Naive thymus-derived CD4-positive, alpha-beta T cell (primary cell): ENCODE measurements at regions of chr2 and their contacts with region 1.

Region 1: GRCh38 chr2:10832203-10832936 is 19.8 kb upstream of the PDIA6 start:
- DNase-seq: peak; percentile 66 to 85 (median 75)
- ATAC-seq: peak; percentile 94
- H3K4me3 ChIP-seq: no peak overlapping the region
- H3K4me3 Mint-ChIP-seq: peak overlapping the region in 8 of 10 donors; percentile 33 to 76 (median 48)
- H3K27ac ChIP-seq: no peak overlapping the region
- H3K27ac Mint-ChIP-seq: peak overlapping the region in 1 of 9 donors; percentile 56
- H3K4me1 ChIP-seq: peaks cover 0 to 2% of the 10 kb centered on the region in 2 donors
- H3K4me1 Mint-ChIP-seq: peaks cover 0 to 16% (median 5%) of the 10 kb centered on the region in 7 donors
- H3K27me3 ChIP-seq: no peaks in the 10 kb centered on the region
- H3K27me3 Mint-ChIP-seq: peaks cover 0 to 29% (median 13%) of the 10 kb centered on the region in 5 donors

Region 2: DNA sequence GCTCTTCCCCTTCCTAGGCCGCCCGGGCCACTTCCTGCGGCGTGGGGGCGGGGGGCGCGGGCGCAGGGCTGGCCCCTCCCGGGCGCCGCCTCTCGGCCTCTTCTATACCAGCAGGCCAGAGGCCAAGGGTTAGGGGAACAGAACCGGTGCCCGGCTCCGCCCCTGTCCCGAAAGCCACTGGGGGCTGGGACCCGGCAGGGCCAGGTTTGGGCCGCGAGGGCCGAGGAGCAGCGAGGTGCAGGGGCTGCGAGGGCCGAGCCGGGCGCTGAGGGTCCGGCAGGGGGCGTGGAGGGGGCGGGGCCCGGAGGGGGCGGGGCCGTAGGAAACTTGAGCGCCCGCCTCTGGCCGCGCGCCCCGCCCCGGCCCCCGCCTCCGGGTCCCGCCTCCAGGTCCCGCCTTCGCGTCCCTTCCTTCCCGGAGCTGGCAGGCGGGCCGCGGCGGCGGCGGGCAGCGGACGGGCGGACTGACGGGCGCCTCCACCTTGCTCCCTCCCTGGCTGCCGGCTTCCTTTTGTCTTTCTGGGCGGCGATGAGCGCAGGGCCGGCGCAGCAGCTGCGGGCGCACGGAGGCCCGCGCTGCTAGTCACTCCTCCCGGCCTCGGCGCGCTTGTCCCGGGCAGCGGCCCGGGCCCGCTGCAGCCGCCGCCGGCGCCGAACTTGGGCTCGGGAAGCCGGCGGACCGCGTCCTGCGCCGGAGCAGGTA is 529.7 kb before region 1 on chr2 and contains the start of gene HPCAL1:
- CTCF ChIA-PET with region 1: no interaction called
- POLR2A ChIA-PET with region 1: no interaction called
- intact Hi-C with region 1: no loop called
- DNase-seq: peak; percentile 69 to 90 (median 84)
- ATAC-seq: peak; percentile 85
- H3K4me3 ChIP-seq: peak within 1 kb of the TSS; percentile 72
- H3K4me3 Mint-ChIP-seq: peak within 1 kb of the TSS; percentile 89 to 100 (median 99)
- H3K27ac ChIP-seq: peak within 1 kb of the TSS; percentile 78
- H3K27ac Mint-ChIP-seq: peak within 1 kb of the TSS; percentile 85 to 97 (median 94)
- H3K4me1 ChIP-seq: peaks cover 42 to 62% of the 10 kb centered on the region in 2 donors
- H3K4me1 Mint-ChIP-seq: peaks cover 46 to 77% (median 66%) of the 10 kb centered on the region in 7 donors
- H3K27me3 ChIP-seq: no peaks in the 10 kb centered on the region
- H3K27me3 Mint-ChIP-seq: no peaks in the 10 kb centered on the region
- total RNA-seq, gene HPCAL1: 44.9 to 90.5 (median 65.8) TPM

Region 3: GRCh38 chr2:10654069-10654468 is 178.3 kb before region 1 on chr2:
- CTCF ChIA-PET with region 1: no interaction called
- POLR2A ChIA-PET with region 1: no interaction called
- intact Hi-C with region 1: no loop called
- DNase-seq: peak in 1 of 9 donors; percentile 39
- ATAC-seq: peak; percentile 54
- H3K4me3 ChIP-seq: no peak overlapping the region
- H3K4me3 Mint-ChIP-seq: peak overlapping the region in 1 of 10 donors; percentile 3
- H3K27ac ChIP-seq: no peak overlapping the region
- H3K27ac Mint-ChIP-seq: peak overlapping the region in 4 of 9 donors; percentile 19 to 67 (median 33)
- H3K4me1 ChIP-seq: peaks cover 0 to 5% of the 10 kb centered on the region in 2 donors
- H3K4me1 Mint-ChIP-seq: peaks cover 5 to 47% (median 13%) of the 10 kb centered on the region in 7 donors
- H3K27me3 ChIP-seq: no peaks in the 10 kb centered on the region
- H3K27me3 Mint-ChIP-seq: no peaks in the 10 kb centered on the region

Region 4: GRCh38 chr2:10864861-10865636 is 32.7 kb after region 1 on chr2:
- CTCF ChIA-PET with region 1: no interaction called
- POLR2A ChIA-PET with region 1: no interaction called
- intact Hi-C with region 1: loop called in 1 of 2 experiments (anchors 1 kb)
- DNase-seq: peak in 6 of 9 donors; percentile 1 to 37 (median 22)
- ATAC-seq: peak; percentile 53
- H3K4me3 ChIP-seq: no peak overlapping the region
- H3K4me3 Mint-ChIP-seq: peak overlapping the region in 9 of 10 donors; percentile 46 to 78 (median 61)
- H3K27ac ChIP-seq: no peak overlapping the region
- H3K27ac Mint-ChIP-seq: peak overlapping the region in 2 of 9 donors; percentile 18 to 36
- H3K4me1 ChIP-seq: peaks cover 13 to 15% of the 10 kb centered on the region in 2 donors
- H3K4me1 Mint-ChIP-seq: peaks cover 13 to 59% (median 35%) of the 10 kb centered on the region in 7 donors
- H3K27me3 ChIP-seq: peaks cover 0 to 3% of the 10 kb centered on the region in 2 donors
- H3K27me3 Mint-ChIP-seq: peaks cover 0 to 46% (median 11%) of the 10 kb centered on the region in 5 donors

Region 5: DNA sequence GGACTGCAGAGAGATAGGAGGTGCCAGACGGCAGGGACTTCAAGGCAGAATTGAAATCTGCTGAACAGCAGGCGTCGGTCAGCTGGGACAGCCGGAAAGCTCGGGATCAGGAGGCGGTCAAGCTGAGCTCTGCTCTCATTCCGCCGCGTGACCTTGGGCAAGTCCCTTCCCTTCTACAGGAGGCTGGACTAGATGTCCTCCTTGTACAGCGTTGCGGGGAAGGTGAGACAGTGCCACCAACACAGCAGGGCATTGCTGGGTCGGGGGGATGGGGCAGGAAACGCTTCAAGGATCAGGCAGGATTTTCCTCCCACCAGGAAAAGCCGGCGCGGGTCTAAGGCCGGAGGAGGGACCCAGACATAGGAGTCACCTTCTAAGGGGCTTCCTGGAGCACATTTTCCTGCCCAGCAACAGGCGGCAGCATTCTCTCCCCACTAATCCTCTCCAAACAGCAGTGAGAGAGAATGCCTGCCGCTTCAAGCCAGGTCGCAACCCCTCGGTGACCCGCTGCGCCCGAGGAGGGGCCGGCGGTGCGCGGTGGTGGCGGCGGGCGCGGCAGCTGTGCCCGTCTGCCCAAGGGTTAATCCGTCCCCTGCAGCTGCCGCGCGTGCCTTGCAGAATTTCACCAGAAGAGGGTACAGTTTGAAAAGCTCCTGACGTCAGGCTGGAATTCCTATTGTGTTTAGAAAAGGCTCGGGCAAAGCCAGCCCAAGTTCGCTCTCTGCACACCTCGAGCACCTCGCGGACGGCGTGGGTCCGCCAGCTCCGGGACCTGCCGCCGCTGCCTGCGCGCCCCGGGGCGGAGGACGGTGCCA is 79.1 kb after region 1 on chr2 and contains the start of gene KCNF1:
- CTCF ChIA-PET with region 1: interaction called, 6 read pairs
- POLR2A ChIA-PET with region 1: no interaction called
- intact Hi-C with region 1: loop called in 1 of 2 experiments (anchors 5 kb)
- DNase-seq: no peak
- ATAC-seq: no peak
- H3K4me3 ChIP-seq: no peak within 1 kb of the TSS
- H3K4me3 Mint-ChIP-seq: peak within 1 kb of the TSS in 8 of 10 donors; percentile 8 to 81 (median 48)
- H3K27ac ChIP-seq: no peak within 1 kb of the TSS
- H3K27ac Mint-ChIP-seq: peak within 1 kb of the TSS in 1 of 9 donors; percentile 1
- H3K4me1 ChIP-seq: no peaks in the 10 kb centered on the region
- H3K4me1 Mint-ChIP-seq: peaks cover 0 to 20% (median 5%) of the 10 kb centered on the region in 7 donors
- H3K27me3 ChIP-seq: no peaks in the 10 kb centered on the region
- H3K27me3 Mint-ChIP-seq: peaks cover 36 to 46% (median 42%) of the 10 kb centered on the region in 5 donors
- total RNA-seq, gene KCNF1: not detected

Region 6: GRCh38 chr2:11124503-11125068 is 292.2 kb after region 1 on chr2:
- CTCF ChIA-PET with region 1: interaction called, 56 read pairs
- POLR2A ChIA-PET with region 1: interaction called, 3 read pairs
- intact Hi-C with region 1: loop called (anchors 1 kb)
- DNase-seq: peak in 8 of 9 donors; percentile 32 to 68 (median 50)
- ATAC-seq: peak; percentile 75
- H3K4me3 ChIP-seq: no peak overlapping the region
- H3K4me3 Mint-ChIP-seq: no peak overlapping the region
- H3K27ac ChIP-seq: no peak overlapping the region
- H3K27ac Mint-ChIP-seq: peak overlapping the region in 1 of 9 donors; percentile 51
- H3K4me1 ChIP-seq: peaks cover 0 to 3% of the 10 kb centered on the region in 2 donors
- H3K4me1 Mint-ChIP-seq: peaks cover 3 to 22% (median 9%) of the 10 kb centered on the region in 7 donors
- H3K27me3 ChIP-seq: no peaks in the 10 kb centered on the region
- H3K27me3 Mint-ChIP-seq: peaks cover 0 to 15% (median 0%) of the 10 kb centered on the region in 5 donors

Region 7: DNA sequence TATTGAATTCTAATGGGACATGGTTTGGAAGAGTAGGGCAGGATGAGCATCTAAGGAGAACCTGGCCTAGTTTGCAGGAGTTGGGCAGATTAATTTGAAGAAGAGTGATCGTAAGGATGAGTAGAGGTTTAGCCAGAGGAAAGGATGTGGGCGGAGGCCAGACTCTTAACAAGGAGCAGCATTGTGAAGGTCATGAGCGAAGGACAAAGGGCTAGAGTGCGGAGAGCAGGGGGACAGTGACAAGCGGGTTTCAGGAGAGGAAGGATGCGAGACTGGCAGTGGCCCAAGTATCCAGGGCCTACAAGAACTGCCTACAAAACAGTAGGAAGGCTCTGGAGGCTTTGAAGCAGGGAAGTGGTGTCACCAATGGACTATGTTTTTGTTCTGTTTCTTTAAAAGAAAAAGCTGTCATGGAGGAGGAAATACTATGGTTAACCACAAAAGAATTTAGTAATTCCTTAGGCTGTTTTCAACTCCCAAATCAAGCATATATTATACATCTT is 343.0 kb after region 1 on chr2:
- CTCF ChIA-PET with region 1: no interaction called
- POLR2A ChIA-PET with region 1: no interaction called
- intact Hi-C with region 1: no loop called
- DNase-seq: no peak
- ATAC-seq: no peak
- H3K4me3 ChIP-seq: no peak overlapping the region
- H3K4me3 Mint-ChIP-seq: peak overlapping the region in 6 of 10 donors; percentile 6 to 49 (median 24)
- H3K27ac ChIP-seq: no peak overlapping the region
- H3K27ac Mint-ChIP-seq: peak overlapping the region in 7 of 9 donors; percentile 52 to 74 (median 58)
- H3K4me1 ChIP-seq: peaks cover 7 to 13% of the 10 kb centered on the region in 2 donors
- H3K4me1 Mint-ChIP-seq: peaks cover 9 to 20% (median 13%) of the 10 kb centered on the region in 7 donors
- H3K27me3 ChIP-seq: no peaks in the 10 kb centered on the region
- H3K27me3 Mint-ChIP-seq: no peaks in the 10 kb centered on the region

Region 8: GRCh38 chr2:11234309-11234708 is 401.9 kb after region 1 on chr2:
- CTCF ChIA-PET with region 1: no interaction called
- POLR2A ChIA-PET with region 1: no interaction called
- intact Hi-C with region 1: loop called in 1 of 2 experiments (anchors 10 kb)
- DNase-seq: peak in 1 of 9 donors; percentile 8
- ATAC-seq: no peak
- H3K4me3 ChIP-seq: no peak overlapping the region
- H3K4me3 Mint-ChIP-seq: no peak overlapping the region
- H3K27ac ChIP-seq: no peak overlapping the region
- H3K27ac Mint-ChIP-seq: no peak overlapping the region
- H3K4me1 ChIP-seq: no peaks in the 10 kb centered on the region
- H3K4me1 Mint-ChIP-seq: peaks cover 0 to 11% (median 5%) of the 10 kb centered on the region in 7 donors
- H3K27me3 ChIP-seq: no peaks in the 10 kb centered on the region
- H3K27me3 Mint-ChIP-seq: no peaks in the 10 kb centered on the region

Region 9: GRCh38 chr2:11446733-11447248 is 614.4 kb after region 1 on chr2:
- CTCF ChIA-PET with region 1: interaction called, 5 read pairs
- POLR2A ChIA-PET with region 1: no interaction called
- intact Hi-C with region 1: loop called (anchors 1 kb)
- DNase-seq: peak; percentile 16 to 65 (median 54)
- ATAC-seq: peak; percentile 83
- H3K4me3 ChIP-seq: no peak overlapping the region
- H3K4me3 Mint-ChIP-seq: no peak overlapping the region
- H3K27ac ChIP-seq: no peak overlapping the region
- H3K27ac Mint-ChIP-seq: peak overlapping the region in 2 of 9 donors; percentile 17 to 52
- H3K4me1 ChIP-seq: no peaks in the 10 kb centered on the region
- H3K4me1 Mint-ChIP-seq: no peaks in the 10 kb centered on the region
- H3K27me3 ChIP-seq: no peaks in the 10 kb centered on the region
- H3K27me3 Mint-ChIP-seq: no peaks in the 10 kb centered on the region

Region 10: DNA sequence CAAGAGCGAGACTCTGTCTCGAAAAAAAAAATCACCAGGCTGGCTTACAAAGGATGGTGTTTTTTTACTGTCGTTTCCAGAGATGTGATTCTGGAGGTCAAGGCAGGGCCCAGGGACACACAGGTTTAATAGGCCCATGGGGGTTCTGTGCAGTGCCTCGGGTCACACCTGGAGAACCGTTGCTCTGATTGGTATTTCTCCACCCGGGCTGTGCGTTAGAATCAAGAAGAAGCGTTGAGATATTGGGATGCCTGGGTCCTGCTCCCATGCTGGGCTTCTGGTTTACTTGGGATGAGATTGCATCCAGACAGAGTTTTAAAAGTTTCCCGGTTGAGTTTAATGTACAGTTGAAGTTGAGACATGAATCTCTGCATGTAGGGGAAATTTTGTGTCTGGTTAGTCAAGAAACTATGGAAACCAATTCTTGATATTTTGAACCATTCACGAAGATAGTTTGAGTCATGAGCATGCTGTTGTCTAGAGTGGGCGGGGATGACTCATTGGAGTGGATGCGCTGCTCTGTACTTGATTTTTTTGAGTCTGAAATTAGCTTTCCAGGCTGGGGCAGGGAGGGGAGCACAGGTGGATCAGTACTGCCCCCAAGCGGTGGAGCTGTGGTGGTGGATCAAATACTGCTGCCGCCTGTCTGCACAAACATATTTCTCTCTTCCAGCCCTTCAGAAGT is 751.6 kb after region 1 on chr2:
- CTCF ChIA-PET with region 1: interaction called, 6 read pairs
- POLR2A ChIA-PET with region 1: no interaction called
- intact Hi-C with region 1: loop called in 1 of 2 experiments (anchors 1 kb)
- DNase-seq: peak; percentile 12 to 86 (median 34)
- ATAC-seq: peak; percentile 79
- H3K4me3 ChIP-seq: no peak overlapping the region
- H3K4me3 Mint-ChIP-seq: no peak overlapping the region
- H3K27ac ChIP-seq: no peak overlapping the region
- H3K27ac Mint-ChIP-seq: no peak overlapping the region
- H3K4me1 ChIP-seq: no peaks in the 10 kb centered on the region
- H3K4me1 Mint-ChIP-seq: peaks cover 0 to 7% (median 3%) of the 10 kb centered on the region in 7 donors
- H3K27me3 ChIP-seq: peaks cover 0 to 3% of the 10 kb centered on the region in 2 donors
- H3K27me3 Mint-ChIP-seq: peaks cover 0 to 4% (median 0%) of the 10 kb centered on the region in 5 donors